Activated CD4-positive, alpha-beta memory T cell treated with anti-CD3 and anti-CD28 coated beads, Interleukin-2, amount 10 ng/mL, durations not matched to agents 7 days and 5 days (primary cell): ENCODE measurements at regions of chr1 and their contacts with region 1.

Region 1: GRCh38 chr1:161071886-161072371 is 2.2 kb upstream of the ARHGAP30 start:
- DNase-seq: peak; percentile 61
- H3K4me3 Mint-ChIP-seq: no peak overlapping the region
- H3K27ac Mint-ChIP-seq: peak overlapping the region; percentile 36
- H3K4me1 Mint-ChIP-seq: peaks cover 40% of the 10 kb centered on the region
- H3K27me3 Mint-ChIP-seq: no peaks in the 10 kb centered on the region

Region 2: DNA sequence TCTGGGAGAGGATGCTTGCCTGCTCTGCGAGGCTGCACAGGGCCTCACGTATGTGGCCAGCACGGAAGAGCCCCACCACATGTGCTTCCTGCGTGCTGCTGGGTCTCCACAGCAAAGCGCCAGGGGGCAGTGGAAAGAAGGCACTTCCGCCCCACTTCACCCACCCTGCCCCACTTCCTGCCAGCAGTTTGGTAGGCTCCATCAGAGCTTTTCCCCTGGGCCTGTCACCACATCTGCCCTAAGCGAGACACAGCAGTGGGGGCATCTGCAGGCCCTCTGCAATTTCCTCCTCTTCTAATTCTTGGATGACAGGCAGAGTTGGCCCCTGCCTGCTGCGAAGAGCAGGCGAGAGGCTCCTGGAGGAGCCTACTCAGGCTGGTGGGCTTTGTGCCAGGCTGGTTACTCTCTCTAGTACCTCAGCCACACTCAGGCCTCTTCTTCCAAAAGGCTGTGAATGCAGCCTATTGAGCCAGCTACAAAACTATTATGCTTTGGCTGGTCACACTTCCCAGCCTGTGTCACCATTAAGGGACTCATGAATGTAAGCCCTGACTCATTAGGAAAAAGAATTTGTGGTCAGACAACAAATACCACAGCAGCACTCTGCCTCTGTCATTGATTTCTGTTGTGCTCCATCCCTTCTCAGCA is 234.2 kb before region 1 on chr1:
- CTCF ChIA-PET with region 1: interaction called, 3 read pairs
- POLR2A ChIA-PET with region 1: interaction called, 14 read pairs
- DNase-seq: peak; percentile 92
- H3K4me3 Mint-ChIP-seq: peak overlapping the region; percentile 52
- H3K27ac Mint-ChIP-seq: peak overlapping the region; percentile 98
- H3K4me1 Mint-ChIP-seq: peaks cover 53% of the 10 kb centered on the region
- H3K27me3 Mint-ChIP-seq: no peaks in the 10 kb centered on the region

Region 3: DNA sequence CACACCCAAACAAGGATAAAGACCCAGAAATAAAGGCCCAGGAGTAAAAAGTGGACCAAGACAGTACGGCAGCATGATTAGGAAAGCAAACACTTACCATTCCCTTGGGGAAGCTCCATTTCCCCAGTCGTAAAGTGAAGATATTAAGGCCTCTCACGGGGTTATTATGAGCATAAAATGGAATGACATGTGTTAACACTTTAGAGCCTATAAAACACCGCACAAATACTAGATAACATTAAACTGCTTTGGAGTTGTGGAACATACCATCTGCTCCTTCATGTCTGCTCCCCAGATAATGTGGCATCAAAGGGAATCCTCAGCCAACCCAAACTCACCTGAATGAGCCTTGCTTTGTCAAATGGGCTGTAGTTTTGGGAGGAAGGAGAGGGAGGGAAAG is 108.4 kb before region 1 on chr1:
- CTCF ChIA-PET with region 1: no interaction called
- POLR2A ChIA-PET with region 1: no interaction called
- DNase-seq: no peak
- H3K4me3 Mint-ChIP-seq: no peak overlapping the region
- H3K27ac Mint-ChIP-seq: no peak overlapping the region
- H3K4me1 Mint-ChIP-seq: no peaks in the 10 kb centered on the region
- H3K27me3 Mint-ChIP-seq: peaks cover 2% of the 10 kb centered on the region

Region 4: DNA sequence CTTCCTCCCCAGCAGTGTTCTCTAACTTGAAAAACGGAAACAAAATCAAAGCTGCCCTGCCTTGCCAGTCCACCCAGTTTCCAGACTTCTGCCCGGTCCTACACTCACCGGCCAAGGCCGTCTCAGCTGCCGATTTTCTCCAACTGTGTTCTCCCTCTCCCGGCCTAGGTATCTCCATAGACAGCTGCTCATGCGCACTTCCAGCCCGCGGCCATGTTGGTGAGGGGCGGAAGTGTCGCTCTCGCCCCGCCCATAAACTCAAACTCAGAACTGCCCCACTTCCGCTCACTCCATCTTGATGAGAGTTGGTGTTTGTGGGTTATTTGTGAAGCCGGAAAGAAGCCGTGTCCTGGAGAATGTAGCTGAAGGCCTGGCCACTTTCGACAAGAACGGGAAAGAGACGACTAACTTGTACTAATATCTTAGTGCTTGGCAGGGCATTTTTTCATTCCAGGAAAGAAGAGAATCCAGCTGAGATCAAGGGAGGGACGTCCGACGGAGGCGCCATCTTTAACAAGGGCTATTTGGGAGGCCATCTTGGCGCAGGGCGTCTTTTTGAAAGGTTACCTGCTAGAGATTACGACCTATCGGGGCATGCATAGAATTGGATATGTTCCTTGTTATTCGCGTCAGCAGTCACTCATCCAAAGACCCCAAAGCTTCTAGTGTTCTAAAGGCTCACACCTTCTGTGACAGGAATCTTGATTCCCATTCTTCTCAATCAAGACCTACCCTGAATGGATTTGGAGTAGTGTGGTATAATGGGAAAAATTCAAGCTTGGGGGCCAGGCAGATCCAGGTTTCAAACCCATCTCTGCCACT is 26.0 kb before region 1 on chr1 and contains the start of gene USF1:
- CTCF ChIA-PET with region 1: interaction called, 21 read pairs
- POLR2A ChIA-PET with region 1: interaction called, 293 read pairs
- DNase-seq: peak; percentile 96
- H3K4me3 Mint-ChIP-seq: peak within 1 kb of the TSS; percentile 88
- H3K27ac Mint-ChIP-seq: peak within 1 kb of the TSS; percentile 97
- H3K4me1 Mint-ChIP-seq: peaks cover 58% of the 10 kb centered on the region
- H3K27me3 Mint-ChIP-seq: no peaks in the 10 kb centered on the region
- total RNA-seq, gene USF1: 67.4 to 68.0 TPM

Region 5: DNA sequence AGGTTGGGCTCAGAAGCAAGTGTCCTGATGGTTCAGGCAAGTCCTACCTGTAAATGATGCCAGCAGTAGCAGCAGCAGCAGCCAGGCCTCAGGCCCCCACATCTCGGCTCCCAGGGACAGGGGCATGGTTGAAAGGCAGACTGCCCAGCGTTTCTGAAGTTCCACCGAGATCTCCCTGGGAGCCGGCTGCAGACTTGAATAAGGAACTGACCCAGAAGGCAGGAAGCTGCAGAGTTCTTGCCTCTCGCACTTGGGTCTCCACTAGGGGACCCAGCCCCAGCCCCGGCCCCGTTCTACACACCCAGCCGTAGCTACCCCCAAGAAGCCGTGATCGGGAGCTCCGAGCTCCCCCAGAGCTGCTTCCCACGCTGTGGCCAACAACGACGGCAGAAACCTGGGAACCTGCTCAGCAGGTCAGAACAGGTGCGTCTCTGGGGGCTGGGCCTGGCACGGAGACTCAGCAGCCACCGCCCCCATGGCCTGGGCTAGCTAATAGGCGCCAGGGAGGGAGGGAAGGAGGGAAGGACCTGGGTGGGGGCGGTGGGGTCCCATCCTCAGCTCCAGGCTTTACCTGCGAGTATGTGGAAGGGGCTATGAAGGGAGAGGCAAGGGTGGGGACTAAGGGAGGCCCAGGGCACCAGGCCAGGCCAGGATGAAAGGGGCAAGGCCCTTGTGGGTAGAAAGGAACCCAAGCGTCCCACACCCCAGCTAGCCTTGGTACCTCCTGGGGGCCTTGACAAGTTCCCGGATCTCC is 17.4 kb after region 1 on chr1 and contains the start of gene NECTIN4:
- CTCF ChIA-PET with region 1: interaction called, 128 read pairs
- POLR2A ChIA-PET with region 1: interaction called, 142 read pairs
- DNase-seq: no peak
- H3K4me3 Mint-ChIP-seq: no peak within 1 kb of the TSS
- H3K27ac Mint-ChIP-seq: no peak within 1 kb of the TSS
- H3K4me1 Mint-ChIP-seq: peaks cover 23% of the 10 kb centered on the region
- H3K27me3 Mint-ChIP-seq: peaks cover 2% of the 10 kb centered on the region
- total RNA-seq, gene NECTIN4: not detected

Region 6: DNA sequence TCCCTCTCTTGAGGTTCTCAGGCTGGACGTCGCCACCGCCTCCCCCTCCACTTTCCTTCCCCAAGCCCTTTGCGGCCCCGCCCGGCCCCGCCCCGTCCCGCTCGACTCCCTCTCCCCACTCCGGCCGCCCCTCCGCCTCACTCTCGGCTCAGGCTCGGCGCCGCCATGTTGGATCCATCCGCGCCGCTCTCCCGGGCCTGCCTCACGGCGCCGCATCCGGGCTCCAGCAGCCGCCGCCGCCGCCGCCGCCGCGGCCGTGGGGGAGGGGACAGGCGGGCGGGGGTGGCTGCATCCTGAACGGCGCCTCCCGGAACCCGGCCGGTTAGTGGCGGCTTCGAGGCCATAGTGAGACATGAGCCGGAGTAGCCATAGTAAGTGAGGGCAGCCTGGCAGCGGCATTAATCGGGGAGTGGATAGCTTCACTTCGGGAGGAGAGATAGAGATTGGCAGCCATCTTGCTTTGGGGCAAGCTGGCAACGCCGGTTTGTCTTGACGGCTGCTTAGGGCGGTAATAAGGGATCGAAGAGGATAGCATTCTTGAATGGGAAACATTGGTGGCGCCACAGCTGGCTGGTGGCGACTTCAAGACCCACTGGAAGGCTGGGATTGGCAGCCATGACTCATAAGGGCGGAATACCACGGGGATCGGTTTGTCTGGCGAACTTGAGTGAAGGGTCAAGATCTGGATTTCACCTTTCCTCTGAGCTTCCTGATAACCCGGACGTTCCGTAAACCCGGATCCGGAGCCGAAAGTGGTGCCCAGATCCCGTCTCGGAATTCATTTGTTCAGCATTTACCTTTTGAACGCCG is 60.7 kb after region 1 on chr1 and contains the start of gene DEDD:
- CTCF ChIA-PET with region 1: interaction called, 17 read pairs
- POLR2A ChIA-PET with region 1: interaction called, 45 read pairs
- DNase-seq: peak; percentile 94
- H3K4me3 Mint-ChIP-seq: no peak within 1 kb of the TSS
- H3K27ac Mint-ChIP-seq: no peak within 1 kb of the TSS
- H3K4me1 Mint-ChIP-seq: peaks cover 43% of the 10 kb centered on the region
- H3K27me3 Mint-ChIP-seq: no peaks in the 10 kb centered on the region
- total RNA-seq, gene DEDD: 38.2 to 40.0 TPM

Region 7: GRCh38 chr1:161185282-161185682 is 113.4 kb after region 1 on chr1:
- CTCF ChIA-PET with region 1: interaction called, 5 read pairs
- POLR2A ChIA-PET with region 1: interaction called, 28 read pairs
- DNase-seq: peak; percentile 88
- H3K4me3 Mint-ChIP-seq: peak overlapping the region; percentile 71
- H3K27ac Mint-ChIP-seq: peak overlapping the region; percentile 93
- H3K4me1 Mint-ChIP-seq: peaks cover 79% of the 10 kb centered on the region
- H3K27me3 Mint-ChIP-seq: no peaks in the 10 kb centered on the region